Ovary (tissue), 10 donors: ENCODE measurements at regions of chr11 and their contacts with region 1.

Region 1: DNA sequence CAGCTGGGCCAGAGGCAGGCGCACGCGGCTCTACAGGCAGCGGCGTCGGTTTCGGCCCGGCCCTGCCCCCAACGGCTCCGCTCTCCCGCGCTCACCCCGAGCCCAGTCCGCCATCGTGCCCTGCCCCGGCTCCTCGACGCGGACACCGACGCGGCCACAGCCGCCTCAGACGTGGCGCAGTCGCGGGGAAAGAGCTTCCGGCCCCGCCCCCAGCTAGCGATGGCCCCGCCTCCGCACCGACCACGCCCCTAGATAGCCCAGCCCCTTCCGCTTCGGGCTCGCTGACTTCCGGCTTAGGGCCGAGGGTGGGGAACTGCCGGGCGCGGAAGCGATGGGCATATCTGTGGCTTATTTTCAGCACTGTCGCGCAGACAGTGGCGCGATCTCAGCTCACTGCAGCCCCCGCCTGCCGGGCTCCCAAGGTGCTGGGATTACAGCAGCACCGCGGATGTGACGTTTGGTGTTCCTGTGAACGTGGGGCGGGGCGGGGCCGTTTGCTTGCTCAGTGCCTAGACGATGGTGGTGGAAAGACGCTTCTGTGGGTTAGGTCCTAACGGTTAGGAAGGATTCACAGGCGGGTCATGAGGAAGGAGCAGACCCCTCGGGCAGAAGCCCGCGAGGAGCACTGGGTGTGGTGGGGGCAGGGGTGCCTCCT is at the starts of genes BET1L and RIC8A:
- DNase-seq: peak; percentile 95 to 98 (median 96)
- H3K4me3 ChIP-seq: peak within 1 kb of the TSS; percentile 78
- H3K27ac ChIP-seq: peak within 1 kb of the TSS; percentile 75 to 98
- H3K4me1 ChIP-seq: peaks cover 19% of the 10 kb centered on the region
- H3K27me3 ChIP-seq: no peaks in the 10 kb centered on the region
- CTCF ChIP-seq: no peak
- EP300 ChIP-seq: peak; percentile 21
- POLR2A ChIP-seq: peak; percentile 91
- total RNA-seq, gene BET1L: 24.6 to 76.6 (median 65.5) TPM
- total RNA-seq, gene RIC8A: 53.4 to 119 (median 87.4) TPM

Region 2: GRCh38 chr11:236774-237767 is 29.7 kb after region 1 on chr11 and contains the start of gene PSMD13:
- intact Hi-C with region 1: loop called in 1 of 4 experiments (anchors 2 kb)
- DNase-seq: peak; percentile 80 to 90 (median 83)
- H3K4me3 ChIP-seq: peak within 1 kb of the TSS; percentile 88
- H3K27ac ChIP-seq: peak within 1 kb of the TSS; percentile 57 to 90
- H3K4me1 ChIP-seq: peaks cover 8% of the 10 kb centered on the region
- H3K27me3 ChIP-seq: no peaks in the 10 kb centered on the region
- CTCF ChIP-seq: peak in 1 of 3 donors; percentile 35
- EP300 ChIP-seq: no peak
- POLR2A ChIP-seq: peak; percentile 58
- total RNA-seq, gene PSMD13: 66.2 to 80.1 (median 75.8) TPM

Region 3: DNA sequence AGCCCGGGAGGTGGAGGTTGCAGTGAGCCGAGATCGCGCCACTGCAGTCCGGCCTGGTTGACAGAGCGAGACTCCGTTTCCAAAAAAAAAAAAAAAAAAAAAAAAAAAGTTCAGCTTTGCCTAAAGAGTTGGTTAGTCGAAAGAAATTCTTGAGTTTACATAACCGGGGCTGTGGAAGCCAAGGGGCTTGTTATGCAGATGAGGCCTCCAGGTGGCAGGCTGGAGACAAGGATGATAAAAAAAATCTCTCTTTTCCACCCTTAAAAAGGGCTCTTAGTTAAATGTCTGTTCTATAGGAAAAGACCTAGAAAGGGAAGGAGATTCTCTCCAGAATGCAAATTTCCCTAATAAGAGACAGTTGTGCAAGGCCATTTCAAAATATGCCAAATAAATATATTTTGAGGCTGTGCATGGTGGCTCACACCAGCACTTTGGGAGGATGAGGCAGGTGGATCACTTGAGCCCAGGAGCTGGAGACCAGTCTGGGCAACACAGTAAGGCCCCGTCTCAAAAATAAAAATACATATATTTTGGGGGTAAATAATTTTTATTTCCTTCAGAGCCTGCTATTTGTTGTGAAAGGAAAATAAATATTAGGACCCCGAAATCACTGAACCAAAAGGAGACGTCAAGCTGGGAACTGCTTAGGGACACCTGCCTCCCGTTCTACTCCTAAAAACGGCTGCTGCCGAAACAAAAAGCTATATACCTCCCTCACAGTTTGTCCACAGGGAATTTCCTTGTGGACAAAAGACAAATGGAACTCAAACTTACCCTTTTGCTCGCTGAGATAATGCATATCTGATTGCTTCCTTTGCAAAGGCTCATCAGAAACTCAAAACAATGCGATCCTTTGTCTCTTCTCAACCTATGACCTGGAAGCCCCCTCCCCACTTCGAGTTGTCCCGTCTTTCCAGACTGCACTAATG is 97.8 kb after region 1 on chr11:
- intact Hi-C with region 1: loop called in 1 of 4 experiments (anchors 10 kb)
- DNase-seq: peak; percentile 74 to 90 (median 83)
- H3K4me3 ChIP-seq: no peak overlapping the region
- H3K27ac ChIP-seq: no peak overlapping the region
- H3K4me1 ChIP-seq: peaks cover 8% of the 10 kb centered on the region
- H3K27me3 ChIP-seq: no peaks in the 10 kb centered on the region
- CTCF ChIP-seq: peak; percentile 49 to 85 (median 82)
- EP300 ChIP-seq: no peak
- POLR2A ChIP-seq: peak; percentile 13

Region 4: GRCh38 chr11:363948-364761 is 156.8 kb after region 1 on chr11:
- intact Hi-C with region 1: loop called in 3 of 4 experiments (anchors 10 kb)
- DNase-seq: peak in 1 of 5 donors; percentile 30
- H3K4me3 ChIP-seq: no peak overlapping the region
- H3K27ac ChIP-seq: no peak overlapping the region
- H3K4me1 ChIP-seq: peaks cover 5% of the 10 kb centered on the region
- H3K27me3 ChIP-seq: no peaks in the 10 kb centered on the region
- CTCF ChIP-seq: no peak
- EP300 ChIP-seq: no peak
- POLR2A ChIP-seq: no peak

Region 5: DNA sequence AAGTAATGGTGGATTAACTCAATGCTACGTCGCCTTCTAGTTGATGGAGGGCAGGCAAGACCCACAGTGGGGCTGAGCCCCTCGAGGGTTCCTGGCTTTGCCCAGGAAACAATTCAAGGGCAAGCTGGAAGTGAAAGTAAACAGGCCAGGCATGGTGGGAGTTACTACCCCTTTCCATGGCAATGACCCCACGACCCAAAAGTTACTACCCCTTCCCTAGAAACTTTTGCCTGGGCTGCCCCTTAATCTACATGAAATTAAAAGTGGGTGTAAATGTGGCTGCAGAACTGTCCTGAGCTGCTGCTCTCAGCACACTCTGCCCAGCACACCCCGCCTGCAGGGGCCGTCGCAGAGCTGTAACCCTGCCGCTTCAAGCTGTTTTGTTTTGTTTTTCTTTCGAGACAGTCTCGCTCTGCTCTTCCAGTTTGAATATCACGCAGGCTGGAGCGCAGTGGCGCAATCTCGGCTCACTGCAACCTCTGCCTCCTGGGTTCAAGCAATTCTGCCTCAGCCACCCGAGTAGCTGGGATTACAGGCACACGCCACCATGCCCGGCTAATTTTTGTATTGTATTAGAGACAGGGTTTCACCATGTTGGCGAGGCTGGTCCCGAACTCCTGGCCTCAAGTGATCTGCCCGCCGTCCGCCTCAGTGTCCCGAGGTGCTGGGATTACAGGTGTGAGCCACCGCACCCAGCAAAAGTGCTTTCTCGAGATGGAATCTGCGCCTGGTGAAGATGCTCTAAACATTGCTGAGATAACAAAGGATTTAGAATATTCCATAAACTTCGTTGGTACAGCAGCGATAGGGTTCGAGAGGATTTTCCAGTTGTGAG is 305.6 kb after region 1 on chr11:
- intact Hi-C with region 1: loop called in 1 of 4 experiments (anchors 5 kb)
- DNase-seq: no peak
- H3K4me3 ChIP-seq: no peak overlapping the region
- H3K27ac ChIP-seq: no peak overlapping the region
- H3K4me1 ChIP-seq: peaks cover 3% of the 10 kb centered on the region
- H3K27me3 ChIP-seq: no peaks in the 10 kb centered on the region
- CTCF ChIP-seq: no peak
- EP300 ChIP-seq: no peak
- POLR2A ChIP-seq: no peak